GM10248 (cell line): ENCODE measurements at regions of chr2 and their contacts with region 1.

Region 1: GRCh38 chr2:26846328-26847306 is 1.3 kb upstream of the DPYSL5 start:
- DNase-seq: peak; percentile 83
- CTCF ChIP-seq: peak; percentile 78

Region 2: DNA sequence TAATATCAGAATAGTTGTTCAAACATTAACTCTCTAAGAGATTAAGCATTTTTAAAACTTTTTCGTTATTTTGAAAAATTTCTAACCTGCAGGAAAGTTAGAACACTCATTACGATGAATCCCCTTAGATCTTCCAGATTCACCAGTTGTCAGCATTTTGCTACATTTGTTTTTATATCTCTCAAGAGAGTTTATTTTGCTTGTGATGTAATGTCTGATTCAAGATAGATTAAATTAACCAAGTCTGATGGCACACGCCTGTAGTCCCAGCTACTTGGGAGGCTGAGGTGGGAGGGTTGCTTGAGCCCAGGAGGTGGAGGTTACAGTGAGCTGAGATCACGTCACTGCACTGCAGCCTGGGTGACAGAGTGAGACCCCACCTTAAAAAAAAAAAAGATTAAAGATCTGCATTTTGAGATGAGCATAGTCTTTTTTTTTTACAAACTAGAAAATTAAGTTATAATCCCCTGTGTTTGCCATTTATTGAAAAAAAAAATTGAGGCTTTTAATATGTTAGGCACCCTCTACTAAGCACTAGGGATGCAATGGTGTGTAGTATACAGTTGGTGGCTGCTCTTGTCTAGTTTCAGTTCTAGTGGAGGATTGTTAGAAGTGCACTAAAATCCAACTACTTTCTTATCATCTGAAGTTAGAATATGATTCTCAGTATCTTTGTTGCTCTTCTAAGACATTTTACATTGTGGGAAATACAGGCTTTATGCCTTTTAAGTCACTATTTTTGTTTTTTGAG is 791.8 kb before region 1 on chr2:
- CTCF ChIA-PET with region 1: no interaction called
- POLR2A ChIA-PET with region 1: no interaction called
- DNase-seq: no peak
- CTCF ChIP-seq: no peak

Region 3: DNA sequence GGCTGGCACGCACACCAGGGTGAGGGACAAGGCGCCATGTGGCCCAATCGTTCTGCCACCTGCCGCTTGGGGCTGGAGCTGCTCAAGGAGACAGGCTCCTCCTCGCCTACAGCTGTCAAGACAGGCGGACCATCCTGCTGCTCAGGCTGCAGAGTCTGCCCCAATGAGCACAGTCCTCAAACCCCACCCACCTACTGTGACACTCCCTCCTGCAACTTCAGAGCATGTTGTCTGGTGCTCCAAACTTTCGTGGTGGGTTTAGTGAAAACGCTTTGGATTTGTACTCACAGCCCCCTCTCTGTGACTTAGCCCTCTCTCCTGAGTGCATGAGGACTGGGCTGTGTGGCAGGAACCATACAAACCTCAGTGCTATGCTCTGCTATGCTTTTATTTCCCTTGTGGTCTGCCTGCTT is 105.7 kb before region 1 on chr2:
- CTCF ChIA-PET with region 1: no interaction called
- POLR2A ChIA-PET with region 1: no interaction called
- DNase-seq: no peak
- CTCF ChIP-seq: no peak

Region 4: DNA sequence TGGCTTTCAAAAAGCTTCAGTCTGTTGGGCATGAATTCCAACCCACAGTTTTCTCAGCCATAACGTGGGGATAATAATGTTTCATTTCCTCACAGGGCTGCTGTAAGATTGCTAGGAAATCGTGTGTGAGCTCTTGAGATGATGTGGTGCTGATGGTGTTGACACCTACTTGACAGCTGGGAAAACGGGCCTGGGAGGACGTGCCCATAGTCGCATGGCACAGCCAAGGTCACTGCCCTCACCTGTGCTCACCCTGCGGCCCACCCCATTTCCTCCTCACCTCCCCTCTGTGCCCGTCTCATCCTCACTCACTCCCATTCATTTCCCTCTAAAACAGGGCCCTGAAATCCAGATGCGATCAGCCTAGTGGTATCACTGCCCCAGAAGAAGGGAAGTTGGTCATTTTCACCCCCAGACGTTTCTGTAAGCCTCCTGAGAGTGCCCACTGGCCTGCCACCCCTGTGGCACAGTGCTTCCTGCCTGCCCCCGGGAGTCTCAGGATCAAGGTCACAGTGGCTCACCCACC is 34.4 kb after region 1 on chr2:
- CTCF ChIA-PET with region 1: interaction called, 10 read pairs
- POLR2A ChIA-PET with region 1: no interaction called
- DNase-seq: no peak
- CTCF ChIP-seq: no peak

Region 5: DNA sequence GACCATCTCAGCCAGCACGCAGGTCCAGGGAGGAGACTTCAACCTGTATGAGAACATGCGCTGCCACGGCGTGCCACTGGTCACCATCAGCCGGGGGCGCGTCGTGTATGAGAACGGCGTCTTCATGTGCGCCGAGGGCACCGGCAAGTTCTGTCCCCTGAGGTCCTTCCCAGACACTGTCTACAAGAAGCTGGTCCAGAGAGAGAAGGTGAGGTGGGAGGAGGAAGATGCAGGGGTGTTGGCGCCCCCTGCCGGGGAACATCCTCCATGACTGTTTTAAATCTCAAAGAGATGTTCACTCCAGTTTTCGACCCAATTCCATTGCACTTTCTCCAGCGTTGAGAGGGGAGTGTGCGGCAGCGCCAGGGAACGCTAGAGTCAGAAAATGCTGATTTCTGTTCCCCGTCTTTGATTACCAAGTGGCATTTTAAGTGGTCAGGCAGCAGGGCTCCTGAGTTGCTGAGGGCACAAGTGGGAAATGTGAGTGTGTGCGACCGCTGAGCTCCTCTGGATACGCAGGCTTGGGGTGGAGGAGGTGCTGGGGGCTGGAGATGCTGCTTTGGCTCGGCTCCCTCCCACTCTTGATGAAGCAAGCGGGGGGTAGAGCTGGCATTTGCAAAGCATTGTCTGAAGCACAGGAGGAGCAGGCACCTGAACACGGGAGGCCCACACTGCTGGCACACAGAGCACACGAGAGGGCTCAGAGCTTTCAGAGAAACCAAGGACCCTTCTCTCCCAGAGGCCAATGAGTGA is 96.1 kb after region 1 on chr2:
- CTCF ChIA-PET with region 1: interaction called, 103 read pairs
- POLR2A ChIA-PET with region 1: no interaction called
- DNase-seq: peak; percentile 85
- CTCF ChIP-seq: peak; percentile 71

Region 6: GRCh38 chr2:26970244-26970920 is 123.8 kb after region 1 on chr2 and contains the start of gene MAPRE3:
- CTCF ChIA-PET with region 1: interaction called, 11 read pairs
- POLR2A ChIA-PET with region 1: no interaction called
- DNase-seq: peak; percentile 95
- CTCF ChIP-seq: no peak

Region 7: DNA sequence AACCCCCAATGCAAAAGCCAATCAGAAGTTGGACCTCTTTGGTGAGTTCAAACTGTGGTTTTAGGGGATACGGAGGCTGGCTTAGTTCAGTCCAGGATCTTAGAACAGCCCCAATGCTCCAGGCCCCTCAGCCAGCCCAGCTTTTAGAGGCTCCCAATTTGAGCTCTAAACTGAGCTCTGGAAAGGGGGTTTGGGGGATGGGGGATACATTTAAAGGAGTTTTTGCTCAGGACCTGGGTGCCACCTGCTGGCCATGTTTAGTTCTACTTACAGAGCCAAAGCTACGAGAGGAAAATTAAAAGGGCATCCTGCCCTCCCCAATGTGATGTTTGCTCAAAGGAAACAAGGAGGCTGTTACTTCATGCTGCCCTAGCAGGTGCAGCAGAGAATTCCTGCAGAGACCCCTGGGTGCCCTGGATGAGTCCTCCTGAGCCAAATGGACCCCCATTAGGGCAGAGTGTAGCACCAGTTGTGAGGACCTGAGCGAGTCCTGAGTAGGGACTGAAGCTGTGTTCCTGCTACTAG is 170.2 kb after region 1 on chr2:
- CTCF ChIA-PET with region 1: interaction called, 17 read pairs
- POLR2A ChIA-PET with region 1: no interaction called
- DNase-seq: peak; percentile 68
- CTCF ChIP-seq: peak; percentile 46